Aorta (tissue), 5 donors: ENCODE measurements at regions of chr12 and their contacts with region 1.

Region 1: GRCh38 chr12:93569656-93570551 is 2.6 kb upstream of the SOCS2 start:
- DNase-seq: peak; percentile 89 to 96
- ATAC-seq: peak; percentile 91
- H3K4me3 ChIP-seq: peak overlapping the region; percentile 62 to 74
- H3K27ac ChIP-seq: peak overlapping the region in 1 of 2 donors; percentile 71
- H3K4me1 ChIP-seq: no peaks in the 10 kb centered on the region
- H3K27me3 ChIP-seq: no peaks in the 10 kb centered on the region

Region 2: DNA sequence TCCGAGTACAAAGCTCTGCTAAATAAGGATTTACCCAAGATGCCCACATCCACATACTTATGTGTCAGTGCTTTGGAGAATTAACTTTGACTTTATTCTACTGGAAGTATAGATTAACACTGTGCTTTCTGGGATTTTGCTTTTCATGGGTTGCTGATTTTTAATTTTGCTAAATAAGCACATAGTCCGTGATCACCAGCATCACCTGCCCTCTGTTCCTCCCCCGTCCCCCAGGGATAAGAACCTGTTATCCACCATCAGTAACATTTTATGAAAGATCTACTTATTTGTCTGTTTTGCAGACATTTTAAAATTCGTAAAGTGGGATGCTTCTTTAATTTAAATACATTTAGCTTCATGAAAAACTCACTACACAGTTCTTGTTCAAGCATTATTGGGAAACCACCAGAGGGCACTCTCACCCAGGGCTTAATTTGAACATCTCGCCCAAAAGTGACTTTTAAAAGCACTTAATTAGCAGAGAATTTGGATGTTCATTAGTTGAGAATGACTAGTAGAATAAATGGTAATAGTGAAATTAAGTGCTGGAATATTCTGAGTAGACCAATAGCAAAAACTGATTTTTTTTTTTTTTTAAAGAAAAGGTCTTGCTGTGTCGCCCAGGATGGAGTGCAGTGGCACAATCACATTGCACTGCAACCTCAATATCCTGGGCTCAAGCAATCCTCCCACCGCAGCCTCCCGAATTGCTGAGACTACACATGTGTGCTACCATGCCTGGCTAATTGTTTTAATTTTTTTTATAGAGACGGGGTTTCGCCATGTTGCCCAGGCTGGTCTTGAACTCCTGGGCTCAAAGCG is 66.9 kb before region 1 on chr12:
- intact Hi-C with region 1: loop called (anchors 5 kb)
- DNase-seq: no peak
- ATAC-seq: no peak
- H3K4me3 ChIP-seq: no peak overlapping the region
- H3K27ac ChIP-seq: no peak overlapping the region
- H3K4me1 ChIP-seq: no peaks in the 10 kb centered on the region
- H3K27me3 ChIP-seq: no peaks in the 10 kb centered on the region

Region 3: DNA sequence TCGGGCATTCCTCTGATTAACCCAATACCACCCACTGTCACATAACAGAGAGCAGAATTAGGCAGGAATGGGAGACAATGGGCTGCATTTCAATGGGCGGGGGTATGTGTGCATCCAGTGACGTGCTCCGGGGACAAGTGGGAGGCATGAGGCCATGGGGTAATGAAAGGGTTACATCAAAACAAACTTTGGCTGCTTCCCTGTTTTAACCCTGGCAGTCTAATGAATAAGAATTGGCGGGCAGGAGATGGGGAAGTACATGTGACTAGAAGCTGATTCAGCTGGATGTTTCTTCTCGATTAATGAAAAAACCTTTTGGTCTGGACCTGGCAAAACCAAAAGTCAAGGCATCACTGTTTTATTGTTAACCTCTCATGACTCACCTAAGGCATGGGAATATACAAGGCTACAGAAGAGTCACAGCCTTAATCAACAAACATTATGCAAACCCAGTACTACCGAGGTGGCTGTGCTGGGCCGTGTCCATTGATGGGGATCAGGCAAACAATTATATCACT is 46.7 kb after region 1 on chr12:
- intact Hi-C with region 1: no loop called
- DNase-seq: no peak
- ATAC-seq: no peak
- H3K4me3 ChIP-seq: no peak overlapping the region
- H3K27ac ChIP-seq: no peak overlapping the region
- H3K4me1 ChIP-seq: no peaks in the 10 kb centered on the region
- H3K27me3 ChIP-seq: no peaks in the 10 kb centered on the region

Region 4: DNA sequence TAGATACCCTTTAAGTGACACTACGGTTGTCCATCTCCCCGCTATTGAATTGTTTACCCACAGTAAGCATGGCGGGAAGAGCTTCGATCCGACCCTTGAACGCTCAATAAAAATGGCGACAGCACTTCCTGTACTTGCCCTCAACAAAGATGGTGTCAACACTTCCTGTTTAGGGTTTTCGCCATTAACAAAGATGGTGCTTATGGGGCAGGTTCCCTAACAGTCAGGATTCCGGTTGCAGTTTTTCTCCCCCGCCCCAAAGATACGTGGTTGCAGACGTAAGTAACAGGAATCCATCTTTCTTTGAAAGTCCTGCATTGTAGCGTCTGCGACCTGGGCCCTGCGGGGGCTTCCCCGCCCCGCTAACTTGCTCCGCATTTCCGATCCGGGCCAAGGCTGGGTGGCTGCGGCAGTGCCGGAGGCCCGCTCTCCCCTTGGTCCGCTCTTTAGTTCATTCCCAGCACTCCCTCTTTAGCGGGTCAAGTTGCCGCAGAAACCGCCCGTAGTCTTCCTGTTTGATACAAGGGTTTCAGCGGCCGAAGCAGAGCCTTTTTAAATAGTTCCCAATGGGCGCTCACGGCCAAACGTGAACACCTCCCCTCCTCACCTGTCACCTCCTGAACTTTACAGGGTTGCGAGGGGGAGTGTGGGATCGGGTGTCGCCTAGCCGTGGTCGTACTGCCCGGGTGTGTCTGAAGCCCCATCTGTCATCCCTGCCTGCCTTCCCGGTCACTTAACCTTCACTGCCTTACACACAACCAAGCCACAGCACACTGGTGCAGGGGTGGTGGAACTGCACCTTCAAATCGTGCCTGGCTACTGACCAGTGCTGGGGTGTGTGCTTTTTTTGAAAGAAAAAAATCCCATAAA is 107.5 kb after region 1 on chr12 and contains the start of gene CRADD:
- intact Hi-C with region 1: loop called (anchors 2 kb)
- DNase-seq: peak; percentile 87
- ATAC-seq: peak; percentile 98
- H3K4me3 ChIP-seq: peak within 1 kb of the TSS; percentile 40 to 86
- H3K27ac ChIP-seq: peak within 1 kb of the TSS; percentile 72 to 99
- H3K4me1 ChIP-seq: no peaks in the 10 kb centered on the region
- H3K27me3 ChIP-seq: no peaks in the 10 kb centered on the region
- total RNA-seq, gene CRADD: 19.5 to 20.5 TPM

Region 5: GRCh38 chr12:93766796-93767523 is 197.1 kb after region 1 on chr12:
- intact Hi-C with region 1: loop called in 1 of 2 experiments (anchors 5 kb)
- DNase-seq: no peak
- ATAC-seq: peak; percentile 88
- H3K4me3 ChIP-seq: no peak overlapping the region
- H3K27ac ChIP-seq: no peak overlapping the region
- H3K4me1 ChIP-seq: peaks cover 0 to 1% of the 10 kb centered on the region in 2 donors
- H3K27me3 ChIP-seq: no peaks in the 10 kb centered on the region

Region 6: DNA sequence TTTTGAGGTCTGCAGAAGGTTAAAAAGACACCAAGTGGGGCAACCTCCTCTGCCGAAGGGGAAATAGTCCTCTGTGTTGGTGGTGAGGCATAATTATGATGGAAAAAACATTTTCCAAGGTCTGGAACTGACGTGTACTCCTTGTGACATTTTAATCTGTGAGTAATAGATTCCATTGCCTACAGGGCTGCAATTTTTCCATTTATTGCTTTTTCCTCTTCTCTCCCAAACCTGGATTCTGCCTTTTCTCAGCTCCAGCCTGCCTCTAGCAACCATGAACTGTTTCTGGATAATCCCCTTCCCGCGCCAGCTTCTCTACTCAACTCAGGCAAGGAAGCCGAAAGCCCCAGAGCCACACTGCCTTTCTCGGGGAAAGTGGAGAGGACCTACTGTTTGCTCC is 348.4 kb after region 1 on chr12:
- intact Hi-C with region 1: loop called in 1 of 2 experiments (anchors 5 kb)
- DNase-seq: peak in 1 of 2 donors; percentile 52
- ATAC-seq: peak; percentile 87
- H3K4me3 ChIP-seq: no peak overlapping the region
- H3K27ac ChIP-seq: peak overlapping the region; percentile 82 to 99
- H3K4me1 ChIP-seq: peaks cover 3% of the 10 kb centered on the region in 2 donors
- H3K27me3 ChIP-seq: no peaks in the 10 kb centered on the region

Region 7: GRCh38 chr12:94101738-94102660 is 532.1 kb after region 1 on chr12:
- intact Hi-C with region 1: loop called (anchors 1 to 2 kb)
- DNase-seq: peak; percentile 89 to 93
- ATAC-seq: peak; percentile 94
- H3K4me3 ChIP-seq: peak overlapping the region; percentile 50 to 85
- H3K27ac ChIP-seq: peak overlapping the region in 1 of 2 donors; percentile 20
- H3K4me1 ChIP-seq: no peaks in the 10 kb centered on the region
- H3K27me3 ChIP-seq: no peaks in the 10 kb centered on the region